ENCODE measurements at regions of chr16 and their contacts with region 1.

Region 1: GRCh38 chr16:53743149-53743566 is 39.2 kb downstream of the FTO start:
- DNase-seq: peak in 1 of 2 experiments; percentile 70
- ATAC-seq: peak; percentile 74 to 86; a peak in 4 of 6 replicates
- H3K4me3 ChIP-seq: no peak overlapping the region
- H3K27ac ChIP-seq: no peak overlapping the region
- H3K4me1 ChIP-seq: peaks cover 30% of the 10 kb centered on the region
- CTCF ChIP-seq: peak; percentile 74
- EP300 ChIP-seq: no peak
- POLR2A ChIP-seq: no peak
- RAD21 ChIP-seq: peak; percentile 50 to 60

Region 2: GRCh38 chr16:53678756-53679343 is 64.3 kb before region 1 on chr16:
- CTCF ChIA-PET with region 1: no interaction called
- POLR2A ChIA-PET with region 1: no interaction called
- DNase-seq: no peak
- ATAC-seq: no peak
- H3K4me3 ChIP-seq: no peak overlapping the region
- H3K27ac ChIP-seq: no peak overlapping the region
- H3K4me1 ChIP-seq: no peaks in the 10 kb centered on the region
- CTCF ChIP-seq: no peak
- EP300 ChIP-seq: no peak
- POLR2A ChIP-seq: no peak
- RAD21 ChIP-seq: no peak

Region 3: DNA sequence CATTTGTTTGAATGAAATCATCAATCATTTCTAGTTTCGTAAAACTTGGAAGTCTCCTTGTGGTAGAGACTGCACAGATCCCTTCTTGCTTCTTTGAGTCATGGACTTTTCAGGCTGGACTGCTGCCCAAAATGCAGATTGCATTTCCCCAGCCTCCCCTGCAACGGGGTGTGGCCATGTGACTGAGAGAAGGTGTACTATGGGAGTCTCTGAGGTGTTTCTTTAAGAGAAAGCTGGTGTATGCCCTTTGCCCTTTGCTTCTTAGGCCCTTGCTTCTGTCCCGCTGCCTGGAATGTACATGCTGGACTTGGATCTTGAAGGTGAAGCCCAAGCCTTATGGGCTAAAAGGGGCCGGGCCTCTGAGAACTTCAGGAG is 12.4 kb after region 1 on chr16:
- CTCF ChIA-PET with region 1: interaction called, 13 read pairs
- POLR2A ChIA-PET with region 1: no interaction called
- DNase-seq: peak in 1 of 2 experiments; percentile 54
- ATAC-seq: peak; percentile 81 to 88
- H3K4me3 ChIP-seq: no peak overlapping the region
- H3K27ac ChIP-seq: peak overlapping the region; percentile 49 to 65; a peak in 4 of 6 replicates
- H3K4me1 ChIP-seq: peaks cover 47% of the 10 kb centered on the region
- CTCF ChIP-seq: no peak
- EP300 ChIP-seq: no peak
- POLR2A ChIP-seq: no peak
- RAD21 ChIP-seq: no peak